Sigmoid colon (tissue), 7 donors: ENCODE measurements at regions of chr16 and their contacts with region 1.

Region 1: GRCh38 chr16:86300746-86301481 is 209.4 kb upstream of the FOXF1 start:
- DNase-seq: peak; percentile 72
- H3K4me3 ChIP-seq: peak overlapping the region in 3 of 4 donors; percentile 19 to 38 (median 34)
- H3K27ac ChIP-seq: peak overlapping the region in 3 of 4 donors; percentile 93 to 96 (median 94)
- H3K4me1 ChIP-seq: peaks cover 0 to 89% (median 80%) of the 10 kb centered on the region in 4 donors
- H3K27me3 ChIP-seq: no peaks in the 10 kb centered on the region
- CTCF ChIP-seq: no peak
- EP300 ChIP-seq: no peak
- POLR2A ChIP-seq: no peak

Region 2: DNA sequence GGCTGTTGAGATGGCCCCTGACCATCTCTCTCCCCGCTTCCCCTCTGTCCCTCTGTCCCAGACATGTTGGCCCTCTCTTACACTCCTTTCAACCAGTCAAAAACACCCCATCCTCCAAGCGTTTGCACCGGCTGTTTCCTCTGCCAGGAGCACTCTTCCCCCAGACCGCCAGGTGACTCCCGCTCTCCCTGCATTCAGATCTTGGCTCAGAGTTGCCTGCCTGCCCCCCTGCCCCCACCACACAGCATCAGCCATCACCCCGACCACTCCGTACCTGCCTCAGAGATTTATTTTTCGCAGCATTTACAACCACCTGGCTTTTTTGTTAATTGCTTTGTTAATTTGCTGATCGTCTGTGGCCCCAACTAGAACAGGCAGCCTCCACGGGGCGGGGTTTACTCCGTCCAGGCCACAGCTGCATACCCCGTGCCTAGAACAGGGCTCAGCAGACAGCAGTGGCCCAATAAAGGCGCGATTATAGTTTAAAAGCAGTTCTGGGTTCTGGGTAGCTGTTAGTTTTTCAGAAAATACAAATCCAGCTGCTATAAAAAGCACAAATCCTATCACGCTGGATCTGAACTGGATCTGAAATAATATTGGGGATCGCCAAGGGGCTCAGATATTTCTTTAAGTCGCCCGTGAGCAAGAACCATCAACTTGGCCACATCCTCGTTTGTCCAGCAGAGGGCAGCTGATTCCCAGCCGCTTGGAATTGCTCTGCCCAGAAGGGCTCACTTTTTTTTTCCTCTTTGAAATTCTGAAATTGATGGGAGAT is 228.4 kb before region 1 on chr16:
- intact Hi-C with region 1: loop called (anchors 5 kb)
- DNase-seq: peak; percentile 89
- H3K4me3 ChIP-seq: no peak overlapping the region
- H3K27ac ChIP-seq: no peak overlapping the region
- H3K4me1 ChIP-seq: peaks cover 0 to 21% (median 8%) of the 10 kb centered on the region in 4 donors
- H3K27me3 ChIP-seq: no peaks in the 10 kb centered on the region
- CTCF ChIP-seq: peak; percentile 46 to 85 (median 78)
- EP300 ChIP-seq: no peak
- POLR2A ChIP-seq: no peak

Region 3: DNA sequence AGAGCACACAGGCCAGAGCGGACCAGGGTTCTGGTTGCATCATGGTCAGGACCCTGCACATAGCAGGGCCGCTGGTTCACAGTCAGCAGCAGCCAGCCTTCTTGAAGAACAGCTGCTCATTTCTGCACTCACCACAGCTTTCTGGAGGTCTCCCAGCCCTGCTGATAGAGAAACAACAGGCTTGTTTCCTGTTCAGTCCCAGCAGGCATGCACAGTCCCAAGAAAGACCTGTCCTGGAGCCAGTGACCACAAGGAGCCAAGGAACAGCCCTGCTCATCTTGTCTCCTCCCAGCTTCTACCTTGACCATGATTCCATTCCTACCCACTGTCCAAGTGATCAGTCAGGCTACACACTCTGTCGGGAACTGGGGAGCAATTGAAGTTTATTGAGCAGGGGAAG is 53.7 kb after region 1 on chr16:
- intact Hi-C with region 1: no loop called
- DNase-seq: no peak
- H3K4me3 ChIP-seq: no peak overlapping the region
- H3K27ac ChIP-seq: peak overlapping the region in 2 of 4 donors; percentile 74 to 82
- H3K4me1 ChIP-seq: peaks cover 0 to 36% (median 16%) of the 10 kb centered on the region in 4 donors
- H3K27me3 ChIP-seq: no peaks in the 10 kb centered on the region
- CTCF ChIP-seq: no peak
- EP300 ChIP-seq: no peak
- POLR2A ChIP-seq: no peak

Region 4: DNA sequence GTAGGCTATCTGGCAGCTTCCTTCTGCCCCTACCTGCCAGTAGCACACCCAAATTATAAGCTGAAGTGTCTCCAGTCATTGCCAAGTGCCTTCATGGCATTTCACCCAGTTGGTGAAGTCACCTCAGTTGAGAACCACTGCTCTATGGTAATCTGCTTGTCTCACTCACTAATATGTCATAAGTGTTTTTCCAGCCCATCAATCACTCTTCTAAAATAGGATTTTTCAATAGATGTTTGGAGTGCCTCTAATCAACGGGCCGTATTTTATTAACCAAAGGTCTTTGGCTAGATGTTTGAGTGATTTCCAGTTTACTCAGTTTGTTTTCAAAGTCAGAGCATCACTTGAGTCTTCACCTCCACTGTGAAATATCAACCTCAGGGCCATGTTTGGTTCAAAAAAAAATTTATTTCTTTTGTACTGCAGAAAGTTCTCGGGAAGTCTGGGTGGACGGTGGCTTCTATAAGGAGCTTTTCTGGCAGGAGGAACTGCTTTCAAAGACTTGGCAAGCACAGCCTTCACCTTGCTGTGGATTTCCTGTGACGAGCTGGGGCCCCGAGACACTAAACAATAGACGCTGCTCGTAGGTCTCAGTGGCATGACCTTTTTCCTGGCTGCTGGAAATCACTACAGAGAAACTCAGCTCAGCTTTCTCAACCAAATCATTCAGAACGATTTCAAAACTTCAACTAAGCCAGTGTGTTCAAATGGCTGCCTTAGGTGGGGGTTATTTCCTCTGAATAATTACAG is 114.3 kb after region 1 on chr16:
- intact Hi-C with region 1: no loop called
- DNase-seq: peak; percentile 80
- H3K4me3 ChIP-seq: no peak overlapping the region
- H3K27ac ChIP-seq: peak overlapping the region; percentile 48 to 77 (median 72)
- H3K4me1 ChIP-seq: peaks cover 0 to 26% (median 18%) of the 10 kb centered on the region in 4 donors
- H3K27me3 ChIP-seq: no peaks in the 10 kb centered on the region
- CTCF ChIP-seq: no peak
- EP300 ChIP-seq: no peak
- POLR2A ChIP-seq: no peak